Esophagus muscularis mucosa (tissue), 4 donors: ENCODE measurements at regions of chr4 and their contacts with region 1.

Region 1: DNA sequence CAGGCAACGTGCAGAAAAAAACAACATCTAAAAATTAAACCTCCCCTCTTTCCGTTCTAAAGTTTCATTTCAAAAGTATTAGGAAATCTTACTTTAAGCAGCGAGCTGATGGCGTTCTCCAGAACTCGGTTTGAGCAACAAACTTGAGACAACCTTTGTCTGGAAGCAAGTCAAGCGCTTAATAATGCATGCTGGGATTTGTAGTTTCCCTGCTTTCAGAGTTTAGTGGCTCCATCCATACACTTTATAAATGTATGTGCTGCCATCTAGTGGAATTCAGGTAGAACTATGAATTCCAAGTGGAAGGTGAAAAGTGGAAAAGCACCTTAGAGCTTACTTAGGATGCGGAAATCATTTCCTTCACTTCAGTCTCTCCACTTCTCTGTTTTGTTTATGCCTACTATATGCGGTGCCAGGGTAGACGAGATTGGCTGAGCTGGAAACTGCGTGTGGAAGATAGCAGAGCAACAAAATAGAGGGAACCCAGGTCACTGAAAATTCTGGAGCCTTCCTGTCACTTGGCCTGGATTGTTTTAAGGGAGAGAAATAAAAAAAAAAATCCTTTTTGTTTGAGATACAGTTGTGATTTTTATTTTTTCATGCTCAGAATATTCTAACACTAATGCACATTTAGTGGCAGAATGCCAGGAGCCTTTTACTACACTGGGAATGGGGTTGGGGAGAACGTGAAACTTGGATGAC is at the start of gene BDH2:
- DNase-seq: no peak
- H3K4me3 ChIP-seq: peak within 1 kb of the TSS; percentile 51 to 61 (median 56)
- H3K27ac ChIP-seq: peak within 1 kb of the TSS; percentile 72 to 80 (median 76)
- H3K4me1 ChIP-seq: peaks cover 11 to 40% (median 34%) of the 10 kb centered on the region in 4 donors
- H3K27me3 ChIP-seq: no peaks in the 10 kb centered on the region
- CTCF ChIP-seq: peak; percentile 78 to 87 (median 79)
- EP300 ChIP-seq: no peak
- POLR2A ChIP-seq: no peak
- total RNA-seq, gene BDH2: 31.6 to 59.4 (median 47.1) TPM

Region 2: DNA sequence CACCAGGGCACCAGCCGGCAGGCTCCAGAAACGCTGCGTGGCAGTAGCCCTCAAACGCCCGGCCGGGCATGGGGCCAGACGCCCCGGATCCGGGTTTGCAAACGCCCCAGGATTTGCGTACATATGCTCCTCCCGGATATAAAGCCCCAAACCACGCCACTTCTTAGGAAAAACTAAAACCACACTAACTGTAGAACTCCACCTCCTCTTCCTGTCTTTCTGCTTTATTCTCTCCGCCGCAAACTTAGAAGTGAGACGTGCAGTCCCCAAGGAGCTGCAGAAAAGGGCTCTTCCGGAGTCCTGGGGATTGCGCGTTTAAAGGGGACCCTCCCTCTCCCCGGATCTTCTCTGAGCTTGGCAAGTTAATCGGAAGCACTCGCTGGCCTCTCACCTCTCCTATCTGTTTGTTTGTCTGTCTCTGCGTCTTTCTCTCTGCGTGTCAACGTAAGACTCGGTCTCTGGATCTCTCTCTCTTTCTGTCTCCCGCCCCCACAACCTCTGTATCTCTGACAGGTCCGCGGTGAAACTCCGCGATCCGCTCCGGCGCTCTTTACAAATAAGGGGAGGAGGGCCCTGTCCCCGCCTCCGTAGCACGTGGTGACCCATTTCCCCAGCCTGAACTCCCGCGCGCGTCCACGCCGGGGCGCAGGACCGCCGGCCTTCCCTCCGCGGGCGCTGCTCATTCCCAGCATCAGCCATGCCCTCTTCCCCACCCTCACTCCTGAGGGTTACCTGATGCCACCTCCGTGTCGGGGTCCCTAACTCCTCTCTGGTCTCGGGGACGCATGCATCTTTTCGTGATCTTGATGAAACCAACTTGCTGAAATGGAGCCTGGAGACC is 754.7 kb before region 1 on chr4 and contains the start of gene SLC39A8:
- intact Hi-C with region 1: loop called (anchors 10 kb)
- DNase-seq: peak; percentile 96
- H3K4me3 ChIP-seq: peak within 1 kb of the TSS; percentile 68 to 83 (median 70)
- H3K27ac ChIP-seq: peak within 1 kb of the TSS; percentile 69 to 76 (median 74)
- H3K4me1 ChIP-seq: peaks cover 7 to 18% (median 12%) of the 10 kb centered on the region in 4 donors
- H3K27me3 ChIP-seq: no peaks in the 10 kb centered on the region
- CTCF ChIP-seq: peak; percentile 67 to 93 (median 72)
- EP300 ChIP-seq: no peak
- POLR2A ChIP-seq: no peak
- total RNA-seq, gene SLC39A8: 4.0 to 6.6 (median 6.0) TPM

Region 3: GRCh38 chr4:102439236-102439614 is 660.6 kb before region 1 on chr4:
- intact Hi-C with region 1: loop called (anchors 10 kb)
- DNase-seq: no peak
- H3K4me3 ChIP-seq: no peak overlapping the region
- H3K27ac ChIP-seq: peak overlapping the region; percentile 1 to 40 (median 33)
- H3K4me1 ChIP-seq: peaks cover 13 to 16% (median 15%) of the 10 kb centered on the region in 4 donors
- H3K27me3 ChIP-seq: no peaks in the 10 kb centered on the region
- CTCF ChIP-seq: no peak
- EP300 ChIP-seq: no peak
- POLR2A ChIP-seq: no peak

Region 4: GRCh38 chr4:102620697-102621497 is 478.9 kb before region 1 on chr4:
- intact Hi-C with region 1: loop called (anchors 5 kb)
- DNase-seq: no peak
- H3K4me3 ChIP-seq: no peak overlapping the region
- H3K27ac ChIP-seq: peak overlapping the region in 1 of 4 donors; percentile 36
- H3K4me1 ChIP-seq: peaks cover 0 to 13% (median 9%) of the 10 kb centered on the region in 4 donors
- H3K27me3 ChIP-seq: no peaks in the 10 kb centered on the region
- CTCF ChIP-seq: peak; percentile 59 to 67 (median 60)
- EP300 ChIP-seq: no peak
- POLR2A ChIP-seq: no peak

Region 5: GRCh38 chr4:102868781-102869568 is 230.9 kb before region 1 on chr4 and contains the start of gene CISD2:
- intact Hi-C with region 1: loop called (anchors 10 kb)
- DNase-seq: peak; percentile 97
- H3K4me3 ChIP-seq: peak within 1 kb of the TSS; percentile 68 to 79 (median 73)
- H3K27ac ChIP-seq: peak within 1 kb of the TSS; percentile 95 to 97 (median 96)
- H3K4me1 ChIP-seq: peaks cover 21 to 26% (median 23%) of the 10 kb centered on the region in 4 donors
- H3K27me3 ChIP-seq: no peaks in the 10 kb centered on the region
- CTCF ChIP-seq: no peak
- EP300 ChIP-seq: no peak
- POLR2A ChIP-seq: peak; percentile 64
- total RNA-seq, gene CISD2: 6.6 to 13.3 (median 10.3) TPM

Region 6: DNA sequence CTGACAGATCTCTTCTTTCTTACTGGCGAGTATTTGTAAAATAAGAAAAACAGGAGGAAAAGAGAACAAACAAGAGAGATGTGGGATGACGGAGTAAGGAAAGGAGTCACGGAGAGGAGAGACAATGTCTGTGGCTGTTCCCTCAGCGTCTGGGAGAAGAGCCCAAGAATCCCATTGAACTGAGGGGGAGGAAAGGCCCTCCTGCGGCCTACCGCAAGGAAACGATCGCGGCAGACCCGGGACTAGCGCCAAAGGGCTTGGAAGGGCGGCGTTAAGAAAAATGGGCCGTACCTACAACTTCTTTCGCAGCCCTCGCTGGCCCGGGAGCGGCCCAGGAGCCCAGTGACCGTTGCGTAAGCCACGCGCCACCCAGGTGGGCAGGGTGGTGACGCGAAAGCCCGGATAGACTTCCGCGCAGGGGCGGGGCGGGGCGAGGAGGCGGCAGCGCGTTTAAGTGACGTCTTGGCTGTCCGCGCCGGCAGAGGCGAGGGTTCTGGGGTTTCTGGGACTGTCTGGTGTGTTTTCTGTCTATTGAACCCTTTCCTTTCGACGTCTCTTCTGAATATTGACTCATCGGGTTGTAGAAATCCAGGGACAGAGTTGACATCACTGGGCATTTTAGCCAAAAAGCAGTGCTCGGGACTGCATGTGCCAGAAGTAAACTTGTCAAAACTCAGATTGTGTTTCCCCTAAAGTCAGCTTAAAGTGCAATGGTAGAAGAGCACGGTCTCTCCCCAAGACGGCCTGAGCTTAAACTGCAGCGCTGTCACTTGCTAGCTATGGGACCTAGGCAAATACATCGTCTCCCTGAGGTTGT is 80.3 kb before region 1 on chr4 and contains the start of gene SLC9B1:
- intact Hi-C with region 1: loop called (anchors 2 kb)
- DNase-seq: peak; percentile 97
- H3K4me3 ChIP-seq: peak within 1 kb of the TSS; percentile 53 to 63 (median 56)
- H3K27ac ChIP-seq: peak within 1 kb of the TSS; percentile 89 to 90 (median 90)
- H3K4me1 ChIP-seq: peaks cover 7 to 18% (median 14%) of the 10 kb centered on the region in 4 donors
- H3K27me3 ChIP-seq: no peaks in the 10 kb centered on the region
- CTCF ChIP-seq: no peak
- EP300 ChIP-seq: peak; percentile 69
- POLR2A ChIP-seq: no peak
- total RNA-seq, gene SLC9B1: 0.29 to 1.3 (median 0.99) TPM in 3 of 4 donors, not detected in the other

Region 7: DNA sequence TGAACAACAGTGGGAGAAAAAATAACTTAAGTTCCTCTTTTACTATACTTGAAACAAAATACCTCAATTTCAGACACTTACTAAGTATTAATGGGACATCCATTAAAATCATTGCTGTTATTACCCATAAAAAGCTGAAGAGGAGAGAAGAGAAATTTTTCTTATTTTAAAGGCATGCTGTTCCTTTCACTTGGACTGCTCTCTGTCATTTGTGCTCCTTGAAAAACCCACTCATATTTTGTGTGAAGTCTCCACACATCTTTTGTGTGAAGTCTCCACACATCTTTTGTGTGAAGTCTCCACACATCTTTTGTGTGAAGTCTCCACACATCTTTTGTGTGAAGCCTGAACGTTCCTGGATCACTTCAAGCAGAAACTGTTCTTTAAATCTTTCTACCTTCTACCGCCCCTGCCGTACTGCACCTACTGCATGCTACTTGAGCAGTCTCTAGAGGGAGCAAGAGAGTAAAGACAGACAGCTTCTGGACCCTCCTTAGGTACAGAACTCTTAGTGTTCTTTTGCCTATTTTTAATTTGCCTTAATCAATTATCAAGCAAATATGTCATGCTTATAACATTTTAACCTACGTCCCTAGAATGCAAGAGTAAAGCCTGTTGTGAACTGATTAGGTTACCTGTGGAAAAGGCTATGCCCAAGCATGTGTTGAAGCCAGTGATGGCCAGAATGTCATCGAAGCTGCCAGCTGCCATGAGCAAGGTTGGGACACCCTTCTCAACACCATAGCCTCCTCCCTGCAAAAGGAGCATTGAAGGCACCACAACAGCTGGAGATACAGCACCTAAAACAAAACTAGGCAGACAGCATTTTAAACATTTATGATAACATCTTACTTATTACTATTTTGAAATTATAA is 53.2 kb before region 1 on chr4:
- intact Hi-C with region 1: loop called (anchors 5 kb)
- DNase-seq: no peak
- H3K4me3 ChIP-seq: no peak overlapping the region
- H3K27ac ChIP-seq: no peak overlapping the region
- H3K4me1 ChIP-seq: no peaks in the 10 kb centered on the region
- H3K27me3 ChIP-seq: no peaks in the 10 kb centered on the region
- CTCF ChIP-seq: peak; percentile 50 to 76 (median 55)
- EP300 ChIP-seq: no peak
- POLR2A ChIP-seq: no peak

Region 8: GRCh38 chr4:104022831-104023230 is 923.0 kb after region 1 on chr4:
- intact Hi-C with region 1: no loop called
- DNase-seq: no peak
- H3K4me3 ChIP-seq: no peak overlapping the region
- H3K27ac ChIP-seq: no peak overlapping the region
- H3K4me1 ChIP-seq: no peaks in the 10 kb centered on the region
- H3K27me3 ChIP-seq: no peaks in the 10 kb centered on the region
- CTCF ChIP-seq: no peak
- EP300 ChIP-seq: no peak
- POLR2A ChIP-seq: no peak